HEK293 (cell line): ENCODE measurements at regions of chr4 and their contacts with region 1.

Region 1: GRCh38 chr4:88435987-88436693 is 20.8 kb upstream of the HERC5 start:
- H3K4me3 ChIP-seq: no peak overlapping the region
- H3K27ac ChIP-seq: no peak overlapping the region
- H3K4me1 ChIP-seq: no peaks in the 10 kb centered on the region
- CTCF ChIP-seq: no peak

Region 2: GRCh38 chr4:88054901-88055300 is 381.2 kb before region 1 on chr4:
- CTCF ChIA-PET with region 1: interaction called, 10 read pairs
- POLR2A ChIA-PET with region 1: no interaction called
- H3K4me3 ChIP-seq: no peak overlapping the region
- H3K27ac ChIP-seq: no peak overlapping the region
- H3K4me1 ChIP-seq: no peaks in the 10 kb centered on the region
- CTCF ChIP-seq: peak; percentile 41; the same call in 1 of the 2 replicates

Region 3: DNA sequence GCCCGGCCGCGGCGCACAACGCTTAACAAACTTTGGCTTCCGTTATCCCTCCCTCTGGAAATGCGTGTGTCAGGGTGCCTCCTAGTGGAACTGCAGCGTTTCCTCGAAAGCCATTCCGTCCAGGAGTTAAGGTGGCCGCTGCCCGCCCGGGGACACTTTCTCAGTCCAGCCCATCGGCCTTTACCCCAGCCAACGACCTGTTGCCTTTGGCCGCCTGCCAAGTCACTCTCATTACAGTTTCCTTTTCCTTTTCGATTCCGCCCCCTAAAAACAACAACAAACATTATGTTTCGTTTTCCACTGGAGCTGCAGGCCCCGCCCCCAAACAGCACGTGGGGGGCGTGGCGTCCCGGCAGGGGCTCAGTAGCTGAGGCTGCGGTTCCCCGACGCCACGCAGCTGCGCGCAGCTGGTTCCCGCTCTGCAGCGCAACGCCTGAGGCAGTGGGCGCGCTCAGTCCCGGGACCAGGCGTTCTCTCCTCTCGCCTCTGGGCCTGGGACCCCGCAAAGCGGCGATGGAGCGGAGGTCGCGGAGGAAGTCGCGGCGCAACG is 20.7 kb after region 1 on chr4 and contains the start of gene HERC5:
- CTCF ChIA-PET with region 1: no interaction called
- POLR2A ChIA-PET with region 1: no interaction called
- H3K4me3 ChIP-seq: peak within 1 kb of the TSS; percentile 64
- H3K27ac ChIP-seq: peak within 1 kb of the TSS; percentile 57; the same call in 1 of the 2 replicates
- H3K4me1 ChIP-seq: no peaks in the 10 kb centered on the region
- CTCF ChIP-seq: peak; percentile 89

Region 4: GRCh38 chr4:88600176-88600838 is 164.2 kb after region 1 on chr4:
- CTCF ChIA-PET with region 1: no interaction called
- POLR2A ChIA-PET with region 1: no interaction called
- H3K4me3 ChIP-seq: no peak overlapping the region
- H3K27ac ChIP-seq: no peak overlapping the region
- H3K4me1 ChIP-seq: peaks cover 13% of the 10 kb centered on the region
- CTCF ChIP-seq: no peak